ENCODE measurements at regions of chr12 and their contacts with region 1.

Region 1: DNA sequence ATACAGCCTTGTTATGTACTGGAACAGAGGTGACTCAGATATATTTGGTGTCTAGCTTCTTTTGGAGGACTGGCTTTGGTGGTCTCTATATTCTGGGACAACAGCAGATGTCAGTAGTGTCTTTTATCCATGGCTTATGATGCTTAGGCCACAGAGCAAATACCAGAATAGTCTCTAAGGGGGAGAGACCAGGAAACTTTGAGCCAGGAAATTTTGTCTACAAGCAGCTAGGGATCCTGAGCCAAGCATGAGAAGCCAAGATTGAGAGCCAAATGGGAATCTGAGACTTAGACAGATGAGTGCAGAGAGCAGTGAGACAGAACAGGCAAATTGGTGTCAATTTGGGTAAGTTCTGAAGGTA is 28.4 kb upstream of the PTPRR start:
- DNase-seq: peak in 1 of 2 donors; percentile 33
- ATAC-seq: peak in 7 of 8 donors; percentile 77 to 96 (median 91)
- H3K4me3 ChIP-seq: no peak overlapping the region
- H3K27ac ChIP-seq: no peak overlapping the region
- H3K4me1 ChIP-seq: no peaks in the 10 kb centered on the region
- H3K27me3 ChIP-seq: no peaks in the 10 kb centered on the region
- CTCF ChIP-seq: peak in 4 of 9 donors; percentile 9 to 42 (median 38)

Region 2: GRCh38 chr12:70895956-70896355 is 53.0 kb before region 1 on chr12:
- intact Hi-C with region 1: no loop called
- DNase-seq: no peak
- ATAC-seq: no peak
- H3K4me3 ChIP-seq: no peak overlapping the region
- H3K27ac ChIP-seq: no peak overlapping the region
- H3K4me1 ChIP-seq: no peaks in the 10 kb centered on the region
- H3K27me3 ChIP-seq: peaks cover 0 to 4% (median 0%) of the 10 kb centered on the region in 7 donors
- CTCF ChIP-seq: no peak

Region 3: DNA sequence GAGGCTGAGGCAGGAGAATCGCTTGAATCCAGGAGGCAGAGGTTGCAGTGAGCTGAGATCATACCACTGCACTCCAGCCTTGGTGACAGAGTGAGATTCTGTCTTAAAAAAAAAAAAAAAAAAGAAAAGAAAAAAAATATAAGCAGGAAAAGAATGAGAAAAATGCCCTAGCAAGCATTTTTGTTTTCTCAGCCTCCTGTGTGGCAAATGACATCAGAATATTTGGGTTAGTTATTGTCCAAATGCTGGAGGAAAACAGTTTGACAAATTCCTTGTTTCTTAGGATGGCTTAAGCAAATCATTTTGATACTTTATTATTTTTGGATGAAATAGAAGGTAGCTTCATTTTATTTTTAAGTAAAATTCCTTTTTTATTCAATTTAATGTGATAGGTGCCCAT is 20.9 kb before region 1 on chr12:
- intact Hi-C with region 1: no loop called
- DNase-seq: no peak
- ATAC-seq: no peak
- H3K4me3 ChIP-seq: no peak overlapping the region
- H3K27ac ChIP-seq: no peak overlapping the region
- H3K4me1 ChIP-seq: no peaks in the 10 kb centered on the region
- H3K27me3 ChIP-seq: peaks cover 0 to 4% (median 0%) of the 10 kb centered on the region in 7 donors
- CTCF ChIP-seq: no peak

Region 4: GRCh38 chr12:71392521-71393145 is 443.7 kb after region 1 on chr12:
- intact Hi-C with region 1: loop called in 1 of 10 experiments (anchors 10 kb)
- DNase-seq: peak in 1 of 2 donors; percentile 5
- ATAC-seq: peak in 6 of 8 donors; percentile 47 to 78 (median 70)
- H3K4me3 ChIP-seq: no peak overlapping the region
- H3K27ac ChIP-seq: no peak overlapping the region
- H3K4me1 ChIP-seq: no peaks in the 10 kb centered on the region
- H3K27me3 ChIP-seq: peaks cover 0 to 4% (median 0%) of the 10 kb centered on the region in 7 donors
- CTCF ChIP-seq: peak; percentile 43 to 85 (median 71)